Common myeloid progenitor, CD34-positive (primary cell): ENCODE measurements at regions of chr3 and their contacts with region 1.

Region 1: DNA sequence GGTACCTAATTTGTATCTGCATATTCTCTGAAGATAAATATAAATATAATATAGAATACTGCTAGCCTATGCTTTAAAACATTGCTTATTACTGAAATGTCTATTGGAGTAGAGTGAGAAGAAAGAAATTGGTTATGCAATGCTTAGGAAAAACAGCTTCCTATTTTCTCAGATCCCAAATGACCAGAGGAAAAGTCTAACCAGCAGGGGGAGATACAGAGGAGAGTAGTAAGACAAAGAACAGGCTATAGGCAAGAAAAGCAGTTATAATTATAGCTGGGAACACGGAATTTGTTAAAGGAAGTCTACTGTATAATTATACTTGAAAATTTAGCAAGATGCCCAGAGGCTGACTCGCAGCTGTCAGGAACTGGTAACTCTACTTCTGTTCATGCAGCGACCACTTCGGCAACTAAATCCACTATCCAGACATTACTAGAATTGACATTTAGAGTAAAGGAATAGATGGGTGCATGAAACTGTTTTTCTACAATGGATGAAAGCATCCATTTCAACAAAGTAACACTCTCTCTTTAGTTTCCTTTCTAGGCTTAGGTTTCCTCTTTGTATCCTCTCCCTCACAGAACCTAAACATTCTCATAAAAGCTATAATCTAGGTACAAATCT is 97.2 kb downstream of the TBC1D5 start:
- DNase-seq: peak; percentile 53 to 68 (median 64)
- H3K4me3 ChIP-seq: no peak overlapping the region
- H3K27ac ChIP-seq: no peak overlapping the region
- H3K4me1 ChIP-seq: peaks cover 0 to 8% (median 3%) of the 10 kb centered on the region in 4 experiments
- H3K27me3 ChIP-seq: no peaks in the 10 kb centered on the region

Region 2: DNA sequence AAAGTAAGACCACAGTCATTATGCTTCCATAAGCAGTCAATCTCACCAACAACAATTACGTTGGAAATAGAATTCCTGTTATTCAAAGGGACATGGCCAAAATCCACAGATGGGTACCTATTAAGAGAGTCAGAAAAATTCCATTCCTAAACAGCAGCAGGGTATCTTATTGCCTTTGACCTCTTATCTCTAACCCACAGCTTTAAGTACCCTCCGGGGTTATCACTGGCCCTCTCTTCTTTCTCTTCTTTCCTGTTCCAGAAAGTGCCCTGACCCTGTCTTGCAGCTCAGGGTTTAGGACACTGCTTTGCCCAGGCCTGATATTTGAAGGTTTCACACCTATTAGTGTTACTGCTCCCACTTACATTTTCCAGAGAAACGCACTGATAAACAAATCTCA is 331.4 kb before region 1 on chr3:
- CTCF ChIA-PET with region 1: no interaction called
- POLR2A ChIA-PET with region 1: no interaction called
- DNase-seq: no peak
- H3K4me3 ChIP-seq: no peak overlapping the region
- H3K27ac ChIP-seq: no peak overlapping the region
- H3K4me1 ChIP-seq: peaks cover 0 to 8% (median 1%) of the 10 kb centered on the region in 4 experiments
- H3K27me3 ChIP-seq: no peaks in the 10 kb centered on the region

Region 3: DNA sequence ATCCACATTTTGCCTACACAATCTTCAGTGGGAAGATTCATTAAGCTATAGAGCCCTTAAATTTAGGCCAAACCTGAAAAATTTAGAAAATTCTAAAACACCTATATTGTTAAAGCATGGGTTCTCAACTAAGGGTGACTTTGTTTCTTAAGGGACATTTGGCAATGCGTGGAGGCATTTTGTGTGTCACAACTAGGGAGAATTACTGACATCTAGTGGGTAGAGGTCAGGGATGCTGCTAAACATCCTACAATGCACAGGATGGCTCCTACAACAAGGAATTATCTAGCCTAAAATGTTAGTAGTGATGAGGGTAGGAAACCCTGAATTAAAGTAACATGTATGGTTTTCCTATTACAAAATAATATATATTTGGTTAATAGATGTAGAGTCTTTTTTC is 41.4 kb after region 1 on chr3:
- CTCF ChIA-PET with region 1: interaction called, 13 read pairs
- POLR2A ChIA-PET with region 1: no interaction called
- DNase-seq: peak; percentile 24 to 50 (median 37)
- H3K4me3 ChIP-seq: no peak overlapping the region
- H3K27ac ChIP-seq: no peak overlapping the region
- H3K4me1 ChIP-seq: no peaks in the 10 kb centered on the region
- H3K27me3 ChIP-seq: no peaks in the 10 kb centered on the region